Activated naive CD4-positive, alpha-beta T cell treated with anti-CD3 and anti-CD28 coated beads for 36 hours (primary cell): ENCODE measurements at regions of chr6 and their contacts with region 1.

Region 1: DNA sequence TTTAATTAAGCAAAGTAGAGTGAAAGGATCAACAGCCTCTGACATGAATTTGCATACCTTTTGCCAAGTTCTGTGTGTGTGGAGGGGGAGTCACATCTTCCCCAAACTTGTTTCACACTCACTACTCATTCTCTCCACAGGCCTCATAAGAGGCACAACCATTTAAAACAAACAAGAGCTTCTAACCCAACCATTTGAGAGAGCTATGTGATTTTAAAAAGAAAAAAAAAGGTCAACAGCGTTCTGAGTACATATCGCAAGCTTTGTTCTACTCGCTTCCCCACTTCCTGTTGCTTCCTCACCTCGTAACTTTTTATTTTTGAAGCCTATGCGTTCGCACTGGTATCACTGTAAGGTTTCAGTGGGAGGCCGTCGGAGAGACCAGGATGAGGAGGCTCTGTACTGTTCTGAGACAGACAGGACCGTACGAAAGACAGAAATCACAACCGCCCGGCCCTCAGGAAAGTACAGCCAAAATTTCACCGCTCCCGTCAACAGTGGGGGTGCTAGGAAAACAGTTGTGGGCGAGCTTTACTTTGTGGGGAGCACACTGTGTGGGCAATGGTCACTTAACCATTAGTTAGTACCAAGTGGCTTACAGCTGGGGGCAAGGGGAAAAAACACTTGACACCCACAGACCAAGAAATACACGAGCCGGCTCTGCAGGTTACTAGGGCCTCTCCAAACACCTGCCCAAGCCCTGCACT is 61.3 kb downstream of the TRERF1 start:
- DNase-seq: peak; percentile 89
- H3K4me3 Mint-ChIP-seq: peak overlapping the region; percentile 69
- H3K27ac Mint-ChIP-seq: peak overlapping the region; percentile 99
- H3K4me1 Mint-ChIP-seq: peaks cover 90% of the 10 kb centered on the region
- H3K27me3 Mint-ChIP-seq: no peaks in the 10 kb centered on the region

Region 2: GRCh38 chr6:42038811-42039408 is 351.5 kb before region 1 on chr6:
- CTCF ChIA-PET with region 1: no interaction called
- intact Hi-C with region 1: loop called (anchors 5 kb)
- DNase-seq: no peak
- H3K4me3 Mint-ChIP-seq: peak overlapping the region; percentile 83
- H3K27ac Mint-ChIP-seq: peak overlapping the region; percentile 97
- H3K4me1 Mint-ChIP-seq: peaks cover 69% of the 10 kb centered on the region
- H3K27me3 Mint-ChIP-seq: no peaks in the 10 kb centered on the region

Region 3: DNA sequence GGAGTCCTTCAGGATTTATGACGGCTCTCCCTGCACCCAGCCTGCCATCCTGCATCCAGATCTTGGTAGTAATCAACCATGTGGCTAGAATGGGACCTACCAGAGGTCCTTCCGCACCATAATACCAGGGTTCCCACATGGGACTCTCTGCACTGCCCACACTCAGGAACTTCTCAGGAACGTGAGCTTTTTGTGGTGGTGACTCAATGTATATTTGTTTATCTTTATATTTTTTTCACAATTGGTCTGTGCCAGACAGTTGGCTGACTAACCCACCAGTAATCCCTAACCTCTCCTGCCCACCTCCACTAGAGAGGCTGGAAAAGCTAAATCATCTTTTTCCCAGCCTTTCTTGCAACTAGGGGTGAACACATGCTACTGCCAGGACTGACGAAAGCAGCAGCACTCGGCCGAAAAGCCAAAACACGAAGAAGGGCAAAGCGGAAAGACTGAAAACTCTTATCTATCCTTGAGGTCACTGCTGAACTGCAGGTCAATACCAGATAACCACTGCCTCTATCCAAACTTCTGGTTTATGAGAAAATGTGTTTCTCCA is 51.6 kb before region 1 on chr6:
- CTCF ChIA-PET with region 1: interaction called, 9 read pairs
- intact Hi-C with region 1: loop called (anchors 1 kb)
- DNase-seq: peak; percentile 19
- H3K4me3 Mint-ChIP-seq: peak overlapping the region; percentile 5
- H3K27ac Mint-ChIP-seq: peak overlapping the region; percentile 64
- H3K4me1 Mint-ChIP-seq: peaks cover 49% of the 10 kb centered on the region
- H3K27me3 Mint-ChIP-seq: no peaks in the 10 kb centered on the region

Region 4: GRCh38 chr6:42367353-42368011 is 22.9 kb before region 1 on chr6:
- CTCF ChIA-PET with region 1: interaction called, 9 read pairs
- intact Hi-C with region 1: loop called (anchors 1 kb)
- DNase-seq: peak; percentile 49
- H3K4me3 Mint-ChIP-seq: peak overlapping the region; percentile 52
- H3K27ac Mint-ChIP-seq: peak overlapping the region; percentile 84
- H3K4me1 Mint-ChIP-seq: peaks cover 53% of the 10 kb centered on the region
- H3K27me3 Mint-ChIP-seq: no peaks in the 10 kb centered on the region

Region 5: DNA sequence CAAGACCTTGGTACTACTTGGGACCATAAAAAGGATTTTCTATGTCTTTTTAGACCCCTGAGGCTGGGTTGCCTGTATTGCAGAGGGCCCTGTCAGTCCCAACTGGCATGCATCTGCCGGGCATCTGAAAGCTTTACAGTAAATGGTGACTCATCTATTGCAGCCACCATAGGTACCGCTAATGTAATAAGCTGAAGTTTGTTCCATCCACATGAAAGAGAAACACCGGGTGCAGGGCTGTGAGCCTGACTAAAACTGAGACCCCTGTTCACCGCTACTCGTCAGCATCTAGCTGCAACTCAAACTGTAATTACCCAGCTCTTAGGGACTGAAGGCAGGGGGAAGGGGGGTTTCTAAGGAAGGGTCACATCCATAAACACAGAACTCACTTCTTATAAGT is 11.8 kb after region 1 on chr6:
- CTCF ChIA-PET with region 1: interaction called, 29 read pairs
- intact Hi-C with region 1: loop called (anchors 1 kb)
- DNase-seq: peak; percentile 85
- H3K4me3 Mint-ChIP-seq: no peak overlapping the region
- H3K27ac Mint-ChIP-seq: peak overlapping the region; percentile 50
- H3K4me1 Mint-ChIP-seq: peaks cover 65% of the 10 kb centered on the region
- H3K27me3 Mint-ChIP-seq: no peaks in the 10 kb centered on the region

Region 6: DNA sequence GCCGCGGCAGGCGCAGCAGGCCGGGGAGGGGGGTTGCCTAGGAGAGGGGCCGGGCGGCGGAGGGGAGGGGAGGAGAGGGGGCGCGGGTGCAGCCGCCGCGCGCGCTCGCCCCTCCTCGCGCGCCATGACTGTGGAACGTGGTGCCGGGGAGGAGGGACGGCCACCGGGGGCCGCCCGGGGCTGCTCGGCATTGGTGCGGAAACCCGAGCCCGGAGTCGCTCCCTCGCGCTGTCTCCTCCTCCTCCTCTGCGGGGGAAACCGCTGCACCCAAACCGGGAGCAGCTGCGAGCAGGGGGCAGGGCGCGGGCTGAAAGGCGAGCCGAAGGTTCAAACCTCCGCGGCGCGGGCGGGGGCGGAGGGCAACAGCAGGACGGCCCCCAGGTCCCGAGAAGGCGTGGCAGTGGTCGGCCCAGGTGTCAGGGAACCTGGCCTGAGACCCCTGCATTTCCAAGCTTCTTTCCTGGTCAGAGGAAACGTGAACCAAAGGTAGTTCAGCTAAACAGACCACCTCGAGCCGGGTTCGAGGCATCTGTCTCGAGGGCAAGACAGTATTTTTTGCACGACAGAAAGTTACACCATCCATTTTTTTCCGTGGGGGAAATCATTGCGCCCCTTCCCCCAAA is 62.8 kb after region 1 on chr6:
- CTCF ChIA-PET with region 1: interaction called, 10 read pairs
- intact Hi-C with region 1: loop called (anchors 1 kb)
- DNase-seq: peak; percentile 87
- H3K4me3 Mint-ChIP-seq: peak overlapping the region; percentile 88
- H3K27ac Mint-ChIP-seq: peak overlapping the region; percentile 81
- H3K4me1 Mint-ChIP-seq: peaks cover 32% of the 10 kb centered on the region
- H3K27me3 Mint-ChIP-seq: peaks cover 7% of the 10 kb centered on the region